Body of pancreas (tissue), 4 donors: ENCODE measurements at regions of chr2 and their contacts with region 1.

Region 1: DNA sequence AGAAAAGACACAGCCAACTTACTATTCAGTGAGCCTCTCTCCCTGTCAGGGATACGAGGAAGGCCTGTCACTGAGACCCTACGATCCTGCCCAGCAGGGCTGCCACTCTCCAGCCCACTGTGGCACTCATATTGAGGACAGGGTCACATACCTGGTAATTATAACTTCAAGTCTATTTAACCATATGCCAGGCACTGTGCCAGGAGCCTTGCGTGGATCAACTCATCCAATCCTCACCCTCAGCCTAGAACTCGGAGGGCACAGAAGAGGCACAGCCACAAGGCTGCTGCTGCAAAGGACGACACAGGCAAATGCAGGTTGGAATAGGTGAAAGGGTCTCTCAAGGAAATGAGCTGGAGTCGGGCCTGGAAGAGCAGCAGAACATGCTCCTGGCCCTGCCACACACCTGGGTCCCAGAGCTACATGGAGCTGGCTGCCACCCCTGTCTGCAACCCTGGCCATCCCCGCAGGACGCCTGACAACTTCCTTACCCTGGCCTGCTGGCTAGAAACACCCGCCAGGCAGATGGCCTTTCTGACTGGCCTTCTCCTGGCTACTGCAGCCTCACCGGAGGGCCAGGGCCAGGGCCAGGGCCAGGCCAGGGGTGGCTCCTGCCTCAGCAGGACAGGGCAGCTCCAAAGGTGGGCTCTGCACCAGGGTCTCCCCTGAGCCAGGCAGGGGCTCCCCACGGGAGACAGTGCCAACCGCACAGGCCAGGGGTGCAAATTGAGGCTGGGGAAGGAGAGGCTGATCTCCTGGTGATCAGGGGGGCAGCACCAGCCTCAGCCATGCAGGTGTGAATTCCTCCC is 32.1 kb upstream of the SLC66A3 start:
- DNase-seq: no peak
- ATAC-seq: no peak
- H3K4me3 ChIP-seq: no peak overlapping the region
- H3K27ac ChIP-seq: no peak overlapping the region
- H3K4me1 ChIP-seq: peaks cover 6% of the 10 kb centered on the region
- H3K27me3 ChIP-seq: no peaks in the 10 kb centered on the region
- CTCF ChIP-seq: no peak
- POLR2A ChIP-seq: no peak

Region 2: DNA sequence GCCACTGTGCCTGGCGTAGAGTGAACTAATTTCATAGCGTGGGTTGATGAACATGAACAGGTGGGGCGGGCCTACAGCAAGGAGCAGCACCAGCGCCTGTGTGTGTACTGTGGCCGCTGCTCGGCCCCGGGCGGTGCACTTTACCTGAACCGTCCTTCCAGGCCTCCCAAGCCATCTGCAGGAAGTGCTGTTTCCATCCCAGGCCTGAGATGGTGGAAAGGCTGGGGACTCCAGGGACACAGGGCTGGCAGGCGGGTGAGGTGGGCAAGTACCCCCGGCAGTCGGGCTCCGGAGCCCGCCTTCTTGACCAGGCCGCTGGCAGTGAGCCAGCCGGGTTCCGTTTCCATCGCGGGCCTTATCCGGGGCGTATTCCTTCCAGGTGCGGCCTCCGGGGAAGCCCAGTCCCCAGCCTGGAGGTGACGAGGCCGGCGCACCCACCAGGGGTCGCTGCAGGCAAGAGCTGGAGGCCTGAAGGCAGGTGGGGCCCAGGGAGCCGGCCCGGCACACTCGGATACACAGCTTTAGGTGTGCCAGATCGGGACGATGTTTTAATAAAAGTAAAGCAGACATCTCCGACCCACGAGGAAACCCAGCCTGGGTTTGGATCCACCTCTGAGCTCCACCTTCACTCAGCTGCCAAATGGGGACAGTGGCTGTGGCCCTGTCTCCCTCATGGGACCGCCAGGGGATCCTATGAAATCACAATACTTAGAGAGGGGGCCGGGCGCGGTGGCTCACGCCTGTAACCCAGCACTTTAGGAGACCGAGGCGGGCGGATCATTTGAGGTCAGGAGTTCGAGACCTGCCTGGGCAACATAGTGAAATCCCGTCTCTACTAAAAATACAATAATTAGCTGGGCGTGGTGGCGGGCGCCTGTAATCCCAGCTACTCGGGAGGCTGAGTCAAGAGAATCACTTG is 287.9 kb before region 1 on chr2:
- intact Hi-C with region 1: loop called (anchors 2 kb)
- DNase-seq: peak; percentile 82 to 92 (median 86)
- ATAC-seq: peak; percentile 83
- H3K4me3 ChIP-seq: no peak overlapping the region
- H3K27ac ChIP-seq: no peak overlapping the region
- H3K4me1 ChIP-seq: peaks cover 17% of the 10 kb centered on the region
- H3K27me3 ChIP-seq: no peaks in the 10 kb centered on the region
- CTCF ChIP-seq: peak; percentile 79 to 94 (median 84)
- POLR2A ChIP-seq: no peak